Caco-2 (cell line): ENCODE measurements at regions of chr4 and their contacts with region 1.

Region 1: DNA sequence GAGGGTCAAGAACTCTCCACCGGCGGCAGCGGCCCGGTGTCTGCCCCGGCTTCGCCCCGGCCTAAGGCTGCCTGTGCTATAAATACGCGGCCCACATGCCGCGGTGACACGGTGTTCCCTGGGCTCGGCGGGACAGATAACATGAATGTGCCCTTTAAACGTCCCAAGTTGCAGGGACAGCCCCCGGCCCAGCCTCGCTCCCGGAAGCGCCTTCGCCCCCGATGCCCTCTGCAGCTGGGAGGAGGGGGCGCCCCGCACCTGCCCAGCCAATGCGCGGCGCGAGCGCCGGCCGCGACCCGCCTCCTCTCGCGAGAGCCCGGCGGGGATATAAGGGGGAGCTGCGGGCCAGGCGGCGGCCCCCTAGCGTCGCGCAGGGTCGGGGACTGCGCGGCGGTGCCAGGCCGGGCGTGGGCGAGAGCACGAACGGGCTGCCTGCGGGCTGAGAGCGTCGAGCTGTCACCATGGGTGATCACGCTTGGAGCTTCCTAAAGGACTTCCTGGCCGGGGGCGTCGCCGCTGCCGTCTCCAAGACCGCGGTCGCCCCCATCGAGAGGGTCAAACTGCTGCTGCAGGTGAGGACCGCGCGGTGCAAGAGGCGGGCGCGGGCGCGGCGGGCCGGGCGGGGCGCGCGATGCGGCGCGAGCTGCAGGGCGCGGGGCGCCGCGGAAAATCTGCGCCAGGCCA is at the start of gene SLC25A4:
- DNase-seq: peak; percentile 88 to 95
- H3K4me3 ChIP-seq: peak within 1 kb of the TSS; percentile 88
- H3K4me3 Mint-ChIP-seq: peak within 1 kb of the TSS; percentile 88
- H3K27ac Mint-ChIP-seq: peak within 1 kb of the TSS; percentile 95
- H3K4me1 ChIP-seq: peaks cover 8% of the 10 kb centered on the region; the same call in 1 of the 2 replicates
- H3K4me1 Mint-ChIP-seq: no peaks in the 10 kb centered on the region
- H3K27me3 ChIP-seq: no peaks in the 10 kb centered on the region
- H3K27me3 Mint-ChIP-seq: no peaks in the 10 kb centered on the region
- CTCF ChIP-seq: peak; percentile 26 to 62
- total RNA-seq, gene SLC25A4: 24.1 and 24.6 TPM in 2 replicates

Region 2: GRCh38 chr4:185082561-185082960 is 60.5 kb before region 1 on chr4:
- CTCF ChIA-PET with region 1: no interaction called
- POLR2A ChIA-PET with region 1: no interaction called
- intact Hi-C with region 1: no loop called
- DNase-seq: no peak
- H3K4me3 ChIP-seq: no peak overlapping the region
- H3K4me3 Mint-ChIP-seq: no peak overlapping the region
- H3K27ac Mint-ChIP-seq: no peak overlapping the region
- H3K4me1 ChIP-seq: no peaks in the 10 kb centered on the region
- H3K4me1 Mint-ChIP-seq: peaks cover 6% of the 10 kb centered on the region
- H3K27me3 ChIP-seq: no peaks in the 10 kb centered on the region
- H3K27me3 Mint-ChIP-seq: peaks cover 17% of the 10 kb centered on the region
- CTCF ChIP-seq: no peak

Region 3: GRCh38 chr4:185304944-185305690 is 162.1 kb after region 1 on chr4:
- CTCF ChIA-PET with region 1: no interaction called
- POLR2A ChIA-PET with region 1: no interaction called
- intact Hi-C with region 1: loop called (anchors 2 kb)
- DNase-seq: peak; percentile 39 to 44
- H3K4me3 ChIP-seq: no peak overlapping the region
- H3K4me3 Mint-ChIP-seq: no peak overlapping the region
- H3K27ac Mint-ChIP-seq: peak overlapping the region; percentile 64
- H3K4me1 ChIP-seq: peaks cover 15% of the 10 kb centered on the region
- H3K4me1 Mint-ChIP-seq: peaks cover 18% of the 10 kb centered on the region
- H3K27me3 ChIP-seq: no peaks in the 10 kb centered on the region
- H3K27me3 Mint-ChIP-seq: no peaks in the 10 kb centered on the region
- CTCF ChIP-seq: peak; percentile 24 to 55